Naive thymus-derived CD4-positive, alpha-beta T cell (primary cell): ENCODE measurements at regions of chr17 and their contacts with region 1.

Region 1: DNA sequence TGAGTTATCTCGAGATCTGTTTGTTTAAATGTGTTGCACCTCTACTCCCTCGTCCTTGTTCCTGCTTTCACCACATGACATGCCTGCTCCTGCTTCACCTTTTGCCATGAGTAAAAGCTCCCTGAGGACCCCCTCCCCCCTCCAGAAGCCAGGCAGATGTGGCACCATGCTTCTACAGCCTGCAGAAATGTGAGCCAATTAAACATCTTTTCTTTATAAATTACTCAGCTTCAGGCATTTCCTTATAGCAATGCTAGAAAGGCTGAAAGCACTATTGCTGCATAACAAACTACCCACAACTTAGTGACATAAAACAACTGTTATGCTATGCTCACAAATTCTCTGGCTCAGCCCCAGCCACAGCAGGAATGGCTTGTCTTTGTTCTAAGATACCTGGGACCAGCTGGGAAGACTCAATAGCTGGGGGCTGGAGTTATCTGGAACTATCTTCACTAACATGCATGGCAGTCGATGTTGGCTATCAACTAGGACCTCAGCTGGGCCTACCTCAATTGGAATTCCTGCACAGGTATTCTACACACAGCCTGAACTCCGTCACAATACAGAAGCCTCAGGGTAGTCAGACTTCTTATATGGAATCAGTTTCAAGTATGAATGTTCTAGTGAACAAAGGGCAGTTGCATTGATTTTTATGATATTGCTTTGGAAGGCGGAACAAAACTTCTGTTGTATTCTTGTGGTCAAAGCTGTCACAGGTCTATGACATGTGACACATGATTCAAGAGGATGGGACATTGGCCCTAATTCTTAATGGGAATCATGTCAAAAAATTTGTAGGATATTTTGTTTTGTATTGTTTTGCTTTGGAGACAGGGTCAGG is 186.0 kb upstream of the PIRT start:
- DNase-seq: no peak
- ATAC-seq: no peak
- H3K4me3 ChIP-seq: no peak overlapping the region
- H3K4me3 Mint-ChIP-seq: no peak overlapping the region
- H3K27ac ChIP-seq: no peak overlapping the region
- H3K27ac Mint-ChIP-seq: no peak overlapping the region
- H3K4me1 ChIP-seq: no peaks in the 10 kb centered on the region
- H3K4me1 Mint-ChIP-seq: no peaks in the 10 kb centered on the region
- H3K27me3 ChIP-seq: no peaks in the 10 kb centered on the region
- H3K27me3 Mint-ChIP-seq: peaks cover 0 to 24% (median 14%) of the 10 kb centered on the region in 5 donors

Region 2: GRCh38 chr17:10992106-10992880 is 31.6 kb before region 1 on chr17:
- CTCF ChIA-PET with region 1: interaction called, 10 read pairs
- POLR2A ChIA-PET with region 1: no interaction called
- intact Hi-C with region 1: no loop called
- DNase-seq: no peak
- ATAC-seq: no peak
- H3K4me3 ChIP-seq: no peak overlapping the region
- H3K4me3 Mint-ChIP-seq: no peak overlapping the region
- H3K27ac ChIP-seq: no peak overlapping the region
- H3K27ac Mint-ChIP-seq: no peak overlapping the region
- H3K4me1 ChIP-seq: no peaks in the 10 kb centered on the region
- H3K4me1 Mint-ChIP-seq: peaks cover 0 to 3% (median 0%) of the 10 kb centered on the region in 7 donors
- H3K27me3 ChIP-seq: no peaks in the 10 kb centered on the region
- H3K27me3 Mint-ChIP-seq: peaks cover 0 to 41% (median 23%) of the 10 kb centered on the region in 5 donors